SK-N-SH (cell line): ENCODE measurements at regions of chr6 and their contacts with region 1.

Region 1: DNA sequence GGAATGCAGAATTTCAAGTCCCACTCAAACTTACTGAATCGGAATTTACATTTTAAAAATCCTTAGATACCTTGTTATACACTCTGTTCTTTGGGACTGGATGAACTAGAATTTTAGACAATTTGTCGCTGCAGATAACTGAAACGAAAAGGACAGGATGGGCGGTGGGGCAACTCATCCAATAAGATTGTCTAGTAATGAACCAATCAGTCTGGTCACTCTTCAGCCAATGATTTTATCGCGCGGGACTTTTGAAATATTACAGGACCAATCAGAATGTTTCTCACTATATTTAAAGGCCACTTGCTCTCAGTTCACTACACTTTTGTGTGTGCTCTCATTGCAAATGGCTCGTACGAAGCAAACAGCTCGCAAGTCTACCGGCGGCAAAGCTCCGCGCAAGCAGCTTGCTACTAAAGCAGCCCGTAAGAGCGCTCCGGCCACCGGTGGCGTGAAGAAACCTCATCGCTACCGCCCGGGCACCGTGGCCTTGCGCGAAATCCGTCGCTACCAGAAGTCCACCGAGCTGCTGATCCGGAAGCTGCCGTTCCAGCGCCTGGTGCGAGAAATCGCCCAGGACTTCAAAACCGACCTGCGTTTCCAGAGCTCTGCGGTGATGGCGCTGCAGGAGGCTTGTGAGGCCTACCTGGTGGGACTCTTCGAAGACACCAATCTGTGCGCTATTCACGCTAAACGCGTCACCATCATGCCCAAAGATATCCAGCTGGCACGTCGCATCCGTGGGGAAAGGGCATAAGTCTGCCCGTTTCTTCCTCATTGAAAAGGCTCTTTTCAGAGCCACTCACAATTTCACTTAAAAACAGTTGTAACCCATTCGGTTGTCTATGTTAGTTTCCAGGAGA is 41.9 kb upstream of the HFE start:
- DNase-seq: peak; percentile 77
- H3K4me3 ChIP-seq: peak overlapping the region; percentile 57 to 60
- H3K27ac ChIP-seq: peak overlapping the region; percentile 79 to 97
- H3K4me1 ChIP-seq: peaks cover 0 to 12% of the 10 kb centered on the region in 2 experiments; a peak in 2 of 4 replicates
- H3K27me3 ChIP-seq: no peaks in the 10 kb centered on the region
- CTCF ChIP-seq: peak; percentile 37
- EP300 ChIP-seq: peak in 1 of 2 experiments; percentile 49; a peak in 1 of 4 replicates
- RAD21 ChIP-seq: no peak

Region 2: GRCh38 chr6:25962149-25963127 is 82.9 kb before region 1 on chr6 and contains the start of gene TRIM38:
- CTCF ChIA-PET with region 1: no interaction called
- POLR2A ChIA-PET with region 1: no interaction called
- DNase-seq: no peak
- H3K4me3 ChIP-seq: peak within 1 kb of the TSS; percentile 45 to 57
- H3K27ac ChIP-seq: peak within 1 kb of the TSS; percentile 70 to 71
- H3K4me1 ChIP-seq: no peaks in the 10 kb centered on the region
- H3K27me3 ChIP-seq: no peaks in the 10 kb centered on the region
- CTCF ChIP-seq: no peak
- EP300 ChIP-seq: no peak
- RAD21 ChIP-seq: no peak
- polyA plus RNA-seq, gene TRIM38: 0.62 and 0.88 TPM in 2 replicates

Region 3: DNA sequence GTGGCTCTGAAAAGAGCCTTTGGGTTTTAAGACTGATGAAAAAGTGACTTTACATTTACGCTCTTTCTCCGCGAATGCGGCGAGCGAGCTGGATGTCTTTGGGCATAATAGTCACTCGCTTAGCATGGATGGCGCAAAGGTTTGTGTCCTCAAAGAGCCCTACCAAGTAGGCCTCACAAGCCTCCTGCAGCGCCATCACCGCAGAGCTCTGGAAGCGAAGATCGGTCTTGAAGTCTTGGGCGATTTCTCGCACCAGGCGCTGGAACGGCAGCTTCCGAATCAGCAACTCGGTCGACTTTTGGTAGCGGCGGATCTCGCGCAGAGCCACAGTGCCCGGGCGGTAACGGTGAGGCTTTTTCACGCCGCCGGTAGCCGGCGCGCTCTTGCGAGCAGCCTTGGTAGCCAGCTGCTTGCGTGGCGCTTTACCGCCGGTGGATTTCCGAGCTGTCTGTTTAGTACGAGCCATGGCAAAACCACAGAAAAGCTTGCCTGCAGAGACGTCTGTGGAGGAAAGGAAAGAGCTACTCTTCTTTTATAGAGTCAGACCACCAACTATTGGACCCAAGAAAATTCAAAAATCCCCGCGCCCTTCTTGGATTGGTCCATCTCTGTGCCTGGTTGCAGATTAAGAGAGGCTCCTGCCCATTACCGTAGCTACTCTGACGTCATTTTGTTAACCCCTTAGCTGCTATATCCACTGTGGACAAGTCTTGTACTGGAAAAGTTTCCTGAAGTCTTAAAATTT is 13.5 kb before region 1 on chr6:
- CTCF ChIA-PET with region 1: interaction called, 18 read pairs
- POLR2A ChIA-PET with region 1: interaction called, 166 read pairs
- DNase-seq: peak; percentile 89
- H3K4me3 ChIP-seq: peak overlapping the region; percentile 73 to 84
- H3K27ac ChIP-seq: peak overlapping the region; percentile 92 to 99
- H3K4me1 ChIP-seq: peaks cover 10 to 23% of the 10 kb centered on the region in 2 experiments; a peak in 3 of 4 replicates
- H3K27me3 ChIP-seq: no peaks in the 10 kb centered on the region
- CTCF ChIP-seq: peak; percentile 30
- EP300 ChIP-seq: peak; percentile 52 to 61; a peak in 2 of 4 replicates
- RAD21 ChIP-seq: no peak

Region 4: GRCh38 chr6:26071886-26072285 is 26.6 kb after region 1 on chr6:
- CTCF ChIA-PET with region 1: no interaction called
- POLR2A ChIA-PET with region 1: no interaction called
- DNase-seq: no peak
- H3K4me3 ChIP-seq: no peak overlapping the region
- H3K27ac ChIP-seq: no peak overlapping the region
- H3K4me1 ChIP-seq: no peaks in the 10 kb centered on the region
- H3K27me3 ChIP-seq: no peaks in the 10 kb centered on the region
- CTCF ChIP-seq: no peak
- EP300 ChIP-seq: no peak
- RAD21 ChIP-seq: no peak

Region 5: DNA sequence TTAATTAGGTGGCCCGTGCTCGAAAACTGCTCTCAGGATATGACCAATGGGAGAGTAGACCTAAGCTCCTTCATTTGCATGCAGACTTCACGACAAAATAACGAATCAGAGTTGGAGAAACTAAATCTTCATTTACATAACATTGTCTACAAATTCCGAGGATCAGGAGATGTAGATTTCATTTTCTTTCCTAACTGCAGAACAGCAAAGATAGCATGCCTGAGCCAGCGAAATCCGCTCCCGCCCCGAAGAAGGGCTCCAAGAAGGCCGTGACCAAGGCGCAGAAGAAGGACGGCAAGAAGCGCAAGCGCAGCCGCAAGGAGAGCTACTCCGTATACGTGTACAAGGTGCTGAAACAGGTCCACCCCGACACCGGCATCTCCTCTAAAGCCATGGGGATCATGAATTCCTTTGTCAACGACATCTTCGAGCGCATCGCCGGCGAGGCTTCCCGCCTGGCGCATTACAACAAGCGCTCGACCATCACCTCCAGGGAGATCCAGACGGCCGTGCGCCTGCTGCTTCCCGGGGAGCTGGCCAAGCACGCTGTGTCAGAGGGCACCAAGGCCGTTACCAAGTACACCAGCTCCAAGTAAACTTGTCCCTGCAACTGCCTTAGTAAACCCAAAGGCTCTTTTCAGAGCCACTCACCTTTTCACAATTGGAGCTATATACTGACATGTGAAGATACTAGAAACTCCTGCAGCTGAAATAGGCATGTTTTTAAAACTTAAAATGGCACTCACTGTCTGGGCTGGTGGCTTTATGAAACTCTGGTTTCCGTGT is 138.5 kb after region 1 on chr6:
- CTCF ChIA-PET with region 1: interaction called, 3 read pairs
- POLR2A ChIA-PET with region 1: interaction called, 23 read pairs
- DNase-seq: peak; percentile 71
- H3K4me3 ChIP-seq: peak overlapping the region; percentile 49 to 56
- H3K27ac ChIP-seq: peak overlapping the region; percentile 62 to 97
- H3K4me1 ChIP-seq: peaks cover 4 to 6% of the 10 kb centered on the region in 2 experiments; a peak in 2 of 4 replicates
- H3K27me3 ChIP-seq: no peaks in the 10 kb centered on the region
- CTCF ChIP-seq: no peak
- EP300 ChIP-seq: peak in 1 of 2 experiments; percentile 39; a peak in 1 of 4 replicates
- RAD21 ChIP-seq: no peak

Region 6: GRCh38 chr6:26234421-26235296 is 189.4 kb after region 1 on chr6:
- CTCF ChIA-PET with region 1: no interaction called
- POLR2A ChIA-PET with region 1: interaction called, 10 read pairs
- DNase-seq: peak; percentile 73
- H3K4me3 ChIP-seq: peak overlapping the region; percentile 61 to 72
- H3K27ac ChIP-seq: peak overlapping the region; percentile 77 to 85
- H3K4me1 ChIP-seq: peaks cover 0 to 3% of the 10 kb centered on the region in 2 experiments; a peak in 3 of 4 replicates
- H3K27me3 ChIP-seq: no peaks in the 10 kb centered on the region
- CTCF ChIP-seq: no peak
- EP300 ChIP-seq: peak in 1 of 2 experiments; percentile 52; a peak in 1 of 4 replicates
- RAD21 ChIP-seq: no peak

Region 7: GRCh38 chr6:27825025-27825793 is 1779.9 kb after region 1 on chr6:
- CTCF ChIA-PET with region 1: no interaction called
- POLR2A ChIA-PET with region 1: interaction called, 11 read pairs
- DNase-seq: no peak
- H3K4me3 ChIP-seq: peak overlapping the region; percentile 86 to 98
- H3K27ac ChIP-seq: peak overlapping the region; percentile 89 to 93
- H3K4me1 ChIP-seq: no peaks in the 10 kb centered on the region; a peak in 3 of 4 replicates
- H3K27me3 ChIP-seq: no peaks in the 10 kb centered on the region
- CTCF ChIP-seq: no peak
- EP300 ChIP-seq: no peak
- RAD21 ChIP-seq: no peak

Region 8: DNA sequence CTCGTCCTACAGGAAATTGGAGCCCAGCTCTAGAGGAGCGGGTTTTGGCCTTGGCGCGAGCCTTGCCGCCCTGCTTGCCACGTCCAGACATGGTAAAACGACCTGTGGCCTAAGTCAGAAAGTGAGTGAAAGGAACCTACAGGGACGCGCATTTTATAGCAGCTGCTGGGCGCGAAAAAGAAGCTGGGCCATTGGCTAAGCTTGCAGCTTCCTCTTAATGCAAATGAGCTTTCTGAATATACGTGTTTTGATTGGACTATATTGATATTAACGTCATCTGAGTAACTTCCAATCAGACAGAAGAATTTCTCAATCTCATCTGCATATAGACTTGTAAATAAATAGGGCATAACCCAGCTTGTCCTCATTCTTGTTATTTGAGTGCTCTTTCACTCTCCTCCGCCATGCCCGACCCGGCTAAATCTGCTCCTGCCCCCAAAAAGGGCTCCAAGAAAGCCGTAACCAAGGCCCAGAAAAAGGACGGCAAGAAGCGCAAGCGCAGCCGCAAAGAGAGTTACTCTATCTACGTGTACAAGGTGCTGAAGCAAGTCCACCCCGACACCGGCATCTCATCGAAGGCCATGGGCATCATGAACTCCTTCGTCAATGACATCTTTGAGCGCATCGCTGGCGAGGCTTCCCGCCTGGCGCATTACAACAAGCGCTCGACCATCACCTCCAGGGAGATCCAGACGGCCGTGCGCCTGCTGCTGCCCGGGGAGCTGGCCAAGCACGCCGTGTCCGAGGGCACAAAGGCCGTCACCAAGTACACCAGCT is 1848.0 kb after region 1 on chr6:
- CTCF ChIA-PET with region 1: no interaction called
- POLR2A ChIA-PET with region 1: interaction called, 12 read pairs
- DNase-seq: peak; percentile 81
- H3K4me3 ChIP-seq: peak overlapping the region; percentile 75 to 93
- H3K27ac ChIP-seq: peak overlapping the region; percentile 84 to 98
- H3K4me1 ChIP-seq: peaks cover 11 to 21% of the 10 kb centered on the region in 2 experiments; a peak in 3 of 4 replicates
- H3K27me3 ChIP-seq: no peaks in the 10 kb centered on the region
- CTCF ChIP-seq: no peak
- EP300 ChIP-seq: 0 out of 4 replicates have a peak, but pooled peaks of 1 of the 2 experiments have one; percentile 68
- RAD21 ChIP-seq: no peak